ENCODE measurements at regions of chr20 and their contacts with region 1.

Region 1: DNA sequence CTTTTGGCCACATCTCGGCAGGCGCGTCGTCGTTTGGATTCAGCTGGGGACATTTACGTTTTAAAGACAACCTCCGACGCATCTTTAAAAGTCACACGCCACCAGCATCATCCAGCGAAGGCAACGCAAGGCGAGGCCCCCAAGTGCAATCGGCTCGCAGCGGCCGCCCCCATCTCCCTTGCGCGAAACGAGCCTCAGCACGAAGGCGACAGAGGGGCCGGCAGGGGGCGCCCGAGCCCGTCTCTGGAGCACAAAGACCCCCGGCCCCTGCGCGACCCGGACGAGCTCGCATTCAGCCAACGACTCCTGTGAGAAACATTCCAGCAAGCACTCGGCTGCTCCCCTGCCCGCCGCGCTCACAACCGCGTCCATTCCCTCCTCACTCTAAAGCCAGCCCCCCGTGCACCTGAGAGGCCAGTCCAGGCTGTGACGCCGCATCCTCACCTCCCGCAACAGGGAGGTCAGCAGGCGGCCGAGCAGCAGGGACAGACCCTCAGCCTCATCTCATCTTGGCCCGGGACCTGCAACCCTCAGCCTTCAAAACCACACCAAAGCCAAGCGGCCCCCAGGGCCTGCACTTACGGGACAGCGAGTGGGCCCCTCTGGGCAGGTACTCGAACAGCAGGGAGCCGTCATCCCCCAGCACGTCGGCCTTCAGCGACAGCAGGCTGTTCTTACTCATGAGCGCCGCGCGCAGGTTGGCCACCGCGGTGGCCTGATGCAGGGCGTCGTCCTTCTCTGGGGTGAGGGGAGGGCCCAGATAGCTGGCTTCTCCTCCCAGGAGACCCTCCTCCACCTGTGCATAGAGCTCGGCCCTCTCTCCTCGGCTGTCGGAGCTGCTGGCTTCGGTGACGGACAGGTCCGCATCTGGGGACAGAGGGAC is 35.8 kb downstream of the SLC2A4RG start:
- DNase-seq: peak; percentile 91
- ATAC-seq: peak; percentile 84
- H3K4me3 Mint-ChIP-seq: peak overlapping the region; percentile 80
- H3K27ac Mint-ChIP-seq: peak overlapping the region; percentile 93
- H3K4me1 Mint-ChIP-seq: peaks cover 14% of the 10 kb centered on the region
- H3K27me3 Mint-ChIP-seq: peaks cover 4% of the 10 kb centered on the region; the same call in 1 of the 2 replicates
- CTCF ChIP-seq: peak; percentile 95

Region 2: DNA sequence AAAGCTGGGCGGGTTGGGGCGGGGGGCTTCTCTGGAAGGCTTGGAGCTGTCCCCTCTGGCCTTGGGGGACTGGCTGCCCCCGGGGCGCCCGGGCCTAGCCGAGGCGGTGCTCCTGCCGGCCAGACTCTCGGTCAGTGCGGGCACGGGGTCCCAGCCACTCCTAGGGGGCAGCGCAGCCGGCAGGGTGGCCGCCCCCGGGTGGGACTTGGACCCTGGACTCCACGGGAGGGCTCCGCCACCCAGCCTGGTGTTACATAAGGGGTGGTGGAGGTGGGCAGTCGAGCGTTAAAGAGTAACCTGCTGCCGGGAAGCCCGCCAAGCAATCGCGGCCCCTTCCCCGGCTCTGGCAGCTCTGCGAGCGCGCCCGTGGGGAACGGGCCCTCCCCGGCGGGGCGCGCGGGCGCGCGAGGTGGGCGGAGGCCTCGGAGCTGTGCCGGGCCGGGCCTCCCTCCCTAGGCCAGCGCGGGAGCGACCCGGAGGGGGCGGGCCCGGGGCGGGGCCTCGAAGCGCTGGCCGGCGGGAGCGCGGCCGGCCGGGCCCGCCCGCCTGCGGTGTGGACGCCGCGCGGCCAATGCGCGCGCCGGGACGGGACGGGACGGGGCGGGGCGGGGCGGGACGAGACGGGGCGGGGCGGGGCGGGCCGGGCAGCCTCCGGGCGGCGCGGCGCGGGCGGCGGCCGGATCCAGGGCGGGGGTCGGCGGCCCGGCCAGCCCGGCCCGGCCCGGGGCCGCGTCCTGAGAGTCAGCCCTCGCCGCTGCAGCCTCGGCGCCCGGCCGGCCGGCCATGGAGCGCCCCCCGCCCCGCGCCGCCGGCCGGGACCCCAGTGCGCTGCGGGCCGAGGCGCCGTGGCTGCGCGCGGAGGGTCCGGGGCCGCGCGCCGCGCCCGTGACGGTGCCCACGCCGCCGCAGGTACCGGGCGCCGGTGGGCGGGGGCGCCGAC is 35.9 kb before region 1 on chr20 and contains the start of gene SLC2A4RG:
- CTCF ChIA-PET with region 1: interaction called, 33 read pairs
- POLR2A ChIA-PET with region 1: no interaction called
- DNase-seq: peak; percentile 58
- ATAC-seq: peak; percentile 61
- H3K4me3 Mint-ChIP-seq: peak within 1 kb of the TSS; percentile 60
- H3K27ac Mint-ChIP-seq: no peak within 1 kb of the TSS
- H3K4me1 Mint-ChIP-seq: no peaks in the 10 kb centered on the region
- H3K27me3 Mint-ChIP-seq: no peaks in the 10 kb centered on the region
- CTCF ChIP-seq: no peak
- total RNA-seq, gene SLC2A4RG: 41.6 to 47.2 TPM (median 43.3 TPM) in 3 replicates

Region 3: GRCh38 chr20:63785691-63786131 is 10.4 kb after region 1 on chr20:
- CTCF ChIA-PET with region 1: interaction called, 54 read pairs
- POLR2A ChIA-PET with region 1: no interaction called
- DNase-seq: no peak
- ATAC-seq: no peak
- H3K4me3 Mint-ChIP-seq: no peak overlapping the region
- H3K27ac Mint-ChIP-seq: peak overlapping the region; percentile 63; the same call in 1 of the 2 replicates
- H3K4me1 Mint-ChIP-seq: no peaks in the 10 kb centered on the region
- H3K27me3 Mint-ChIP-seq: no peaks in the 10 kb centered on the region
- CTCF ChIP-seq: no peak

Region 4: GRCh38 chr20:63810730-63811494 is 35.6 kb after region 1 on chr20:
- CTCF ChIA-PET with region 1: interaction called, 17 read pairs
- POLR2A ChIA-PET with region 1: interaction called, 5 read pairs
- DNase-seq: no peak
- ATAC-seq: no peak
- H3K4me3 Mint-ChIP-seq: no peak overlapping the region
- H3K27ac Mint-ChIP-seq: peak overlapping the region; percentile 23; the same call in 1 of the 2 replicates
- H3K4me1 Mint-ChIP-seq: no peaks in the 10 kb centered on the region
- H3K27me3 Mint-ChIP-seq: no peaks in the 10 kb centered on the region
- CTCF ChIP-seq: no peak

Region 5: GRCh38 chr20:63858393-63859165 is 83.2 kb after region 1 on chr20:
- CTCF ChIA-PET with region 1: interaction called, 68 read pairs
- POLR2A ChIA-PET with region 1: no interaction called
- DNase-seq: no peak
- ATAC-seq: peak; percentile 33
- H3K4me3 Mint-ChIP-seq: peak overlapping the region; percentile 43
- H3K27ac Mint-ChIP-seq: peak overlapping the region; percentile 86
- H3K4me1 Mint-ChIP-seq: peaks cover 47% of the 10 kb centered on the region
- H3K27me3 Mint-ChIP-seq: peaks cover 9% of the 10 kb centered on the region
- CTCF ChIP-seq: no peak

Region 6: DNA sequence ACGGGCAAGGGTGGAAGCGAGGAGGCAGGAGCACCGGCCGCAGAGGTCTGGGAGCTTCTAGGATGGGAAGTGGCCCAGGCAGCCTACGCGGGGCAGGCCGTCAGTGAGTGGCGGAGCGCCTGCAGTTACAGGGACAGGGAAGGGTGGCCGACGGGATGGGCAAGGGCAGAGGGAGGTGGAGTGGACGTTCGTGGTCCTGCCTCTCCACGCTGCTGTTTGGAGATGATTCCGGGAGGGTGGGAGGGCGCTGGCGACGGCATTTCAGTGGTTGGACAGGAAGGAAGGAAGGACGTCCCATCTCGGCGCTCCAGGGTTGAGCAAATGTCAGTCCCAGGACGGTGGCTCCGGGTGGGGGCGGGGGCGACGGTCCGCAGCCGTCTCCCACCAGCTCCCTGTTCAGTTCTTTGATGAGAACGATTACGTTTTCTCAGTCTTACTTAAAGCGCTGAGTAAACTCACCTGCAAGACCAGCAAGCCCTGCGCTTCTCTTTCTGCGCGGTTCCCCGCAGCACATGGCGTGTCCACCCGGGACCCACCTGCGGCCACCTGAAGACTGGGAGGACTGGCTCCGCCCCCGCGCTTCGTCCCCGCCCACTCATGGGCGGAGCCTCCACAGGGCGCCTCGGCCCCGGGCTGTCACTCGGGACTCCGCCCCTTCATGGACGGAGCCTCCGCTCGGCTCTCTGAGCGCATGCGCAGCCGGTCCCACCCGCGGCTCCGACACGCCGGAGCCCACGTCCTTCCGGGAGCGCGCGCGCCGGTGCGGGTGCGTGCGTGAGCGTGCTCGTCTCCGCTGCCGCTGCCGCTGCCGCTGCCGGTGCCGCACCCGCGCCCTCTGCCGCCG is 119.2 kb after region 1 on chr20 and contains the start of gene DNAJC5:
- CTCF ChIA-PET with region 1: interaction called, 20 read pairs
- POLR2A ChIA-PET with region 1: no interaction called
- DNase-seq: peak; percentile 92
- ATAC-seq: peak; percentile 93
- H3K4me3 Mint-ChIP-seq: peak within 1 kb of the TSS; percentile 87
- H3K27ac Mint-ChIP-seq: peak within 1 kb of the TSS; percentile 81
- H3K4me1 Mint-ChIP-seq: peaks cover 15% of the 10 kb centered on the region
- H3K27me3 Mint-ChIP-seq: no peaks in the 10 kb centered on the region
- CTCF ChIP-seq: no peak
- total RNA-seq, gene DNAJC5: 28.5 to 31.5 TPM (median 29.6 TPM) in 3 replicates

Region 7: GRCh38 chr20:63980806-63981728 is 205.7 kb after region 1 on chr20 and contains the start of gene PRPF6:
- CTCF ChIA-PET with region 1: interaction called, 13 read pairs
- POLR2A ChIA-PET with region 1: no interaction called
- DNase-seq: peak; percentile 98
- ATAC-seq: peak; percentile 71
- H3K4me3 Mint-ChIP-seq: peak within 1 kb of the TSS; percentile 94
- H3K27ac Mint-ChIP-seq: peak within 1 kb of the TSS; percentile 93
- H3K4me1 Mint-ChIP-seq: peaks cover 21% of the 10 kb centered on the region
- H3K27me3 Mint-ChIP-seq: peaks cover 10% of the 10 kb centered on the region
- CTCF ChIP-seq: peak; percentile 60
- total RNA-seq, gene PRPF6: 79.4 to 84.6 TPM (median 80.5 TPM) in 3 replicates

Measured in WTC11 (cell line).